ENCODE measurements at regions of chr14 and their contacts with region 1.

Region 1: GRCh38 chr14:34982417-34983147 is at the start of gene SRP54:
- DNase-seq: peak; percentile 99
- ATAC-seq: peak; percentile 91
- H3K4me3 ChIP-seq: peak within 1 kb of the TSS; percentile 71 to 99 (median 95)
- H3K4me3 Mint-ChIP-seq: no peak within 1 kb of the TSS
- H3K27ac ChIP-seq: peak within 1 kb of the TSS; percentile 95 to 97
- H3K27ac Mint-ChIP-seq: no peak within 1 kb of the TSS
- H3K4me1 ChIP-seq: peaks cover 25 to 26% of the 10 kb centered on the region in 2 donors
- H3K4me1 Mint-ChIP-seq: peaks cover 23% of the 10 kb centered on the region
- H3K27me3 ChIP-seq: no peaks in the 10 kb centered on the region
- H3K27me3 Mint-ChIP-seq: no peaks in the 10 kb centered on the region
- CTCF ChIP-seq: no peak
- total RNA-seq, gene SRP54: 54.9 and 59.5 TPM in 2 replicates

Region 2: DNA sequence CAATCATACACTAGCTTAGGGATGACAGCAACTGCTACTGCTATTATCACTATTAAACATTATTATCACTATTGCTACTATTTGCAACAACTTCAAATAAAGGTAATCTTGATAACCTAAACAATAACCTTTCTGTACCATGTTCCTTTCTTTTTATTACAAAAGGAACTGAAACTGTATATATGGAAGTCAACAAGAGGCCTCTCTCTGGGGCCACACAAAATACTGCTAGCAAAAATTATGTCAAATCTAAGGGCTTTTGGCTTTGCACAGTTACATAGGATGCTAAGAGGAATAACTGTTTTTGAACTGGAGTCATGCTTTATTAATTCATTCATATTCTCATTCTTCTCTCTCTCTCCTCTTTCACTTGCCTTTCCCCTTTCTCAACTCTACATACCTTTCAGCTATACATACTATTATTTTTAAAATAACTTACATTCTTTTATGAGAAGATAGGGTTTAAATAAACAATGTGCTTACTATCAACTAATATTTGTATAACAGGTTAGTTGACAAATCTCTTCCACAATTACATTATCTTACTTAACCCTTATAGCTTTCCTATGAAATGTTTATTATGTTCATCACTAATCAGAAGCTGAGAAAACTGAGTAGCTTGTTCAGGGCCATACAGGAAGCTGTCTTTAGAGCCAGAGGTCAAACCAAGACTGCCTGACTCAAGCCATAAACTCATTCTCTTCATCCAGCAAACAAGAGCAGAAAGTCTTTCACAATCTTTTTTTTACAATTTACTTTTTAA is 546.3 kb before region 1 on chr14:
- CTCF ChIA-PET with region 1: no interaction called
- POLR2A ChIA-PET with region 1: no interaction called
- intact Hi-C with region 1: no loop called
- DNase-seq: no peak
- ATAC-seq: no peak
- H3K4me3 ChIP-seq: no peak overlapping the region
- H3K4me3 Mint-ChIP-seq: no peak overlapping the region
- H3K27ac ChIP-seq: peak overlapping the region in 1 of 2 donors; percentile 45
- H3K27ac Mint-ChIP-seq: no peak overlapping the region
- H3K4me1 ChIP-seq: peaks cover 14 to 15% of the 10 kb centered on the region in 2 donors
- H3K4me1 Mint-ChIP-seq: peaks cover 21% of the 10 kb centered on the region
- H3K27me3 ChIP-seq: no peaks in the 10 kb centered on the region
- H3K27me3 Mint-ChIP-seq: no peaks in the 10 kb centered on the region
- CTCF ChIP-seq: no peak

Region 3: GRCh38 chr14:34539407-34540180 is 443.0 kb before region 1 on chr14 and contains the start of gene EAPP:
- CTCF ChIA-PET with region 1: no interaction called
- POLR2A ChIA-PET with region 1: no interaction called
- intact Hi-C with region 1: loop called (anchors 5 kb)
- DNase-seq: peak; percentile 96
- ATAC-seq: peak; percentile 99
- H3K4me3 ChIP-seq: peak within 1 kb of the TSS; percentile 44 to 97 (median 89)
- H3K4me3 Mint-ChIP-seq: peak within 1 kb of the TSS; percentile 99
- H3K27ac ChIP-seq: peak within 1 kb of the TSS; percentile 91 to 97
- H3K27ac Mint-ChIP-seq: peak within 1 kb of the TSS; percentile 99
- H3K4me1 ChIP-seq: peaks cover 18 to 24% of the 10 kb centered on the region in 2 donors
- H3K4me1 Mint-ChIP-seq: peaks cover 21% of the 10 kb centered on the region
- H3K27me3 ChIP-seq: no peaks in the 10 kb centered on the region
- H3K27me3 Mint-ChIP-seq: no peaks in the 10 kb centered on the region
- CTCF ChIP-seq: no peak
- total RNA-seq, gene EAPP: 54.8 and 58.0 TPM in 2 replicates

Region 4: DNA sequence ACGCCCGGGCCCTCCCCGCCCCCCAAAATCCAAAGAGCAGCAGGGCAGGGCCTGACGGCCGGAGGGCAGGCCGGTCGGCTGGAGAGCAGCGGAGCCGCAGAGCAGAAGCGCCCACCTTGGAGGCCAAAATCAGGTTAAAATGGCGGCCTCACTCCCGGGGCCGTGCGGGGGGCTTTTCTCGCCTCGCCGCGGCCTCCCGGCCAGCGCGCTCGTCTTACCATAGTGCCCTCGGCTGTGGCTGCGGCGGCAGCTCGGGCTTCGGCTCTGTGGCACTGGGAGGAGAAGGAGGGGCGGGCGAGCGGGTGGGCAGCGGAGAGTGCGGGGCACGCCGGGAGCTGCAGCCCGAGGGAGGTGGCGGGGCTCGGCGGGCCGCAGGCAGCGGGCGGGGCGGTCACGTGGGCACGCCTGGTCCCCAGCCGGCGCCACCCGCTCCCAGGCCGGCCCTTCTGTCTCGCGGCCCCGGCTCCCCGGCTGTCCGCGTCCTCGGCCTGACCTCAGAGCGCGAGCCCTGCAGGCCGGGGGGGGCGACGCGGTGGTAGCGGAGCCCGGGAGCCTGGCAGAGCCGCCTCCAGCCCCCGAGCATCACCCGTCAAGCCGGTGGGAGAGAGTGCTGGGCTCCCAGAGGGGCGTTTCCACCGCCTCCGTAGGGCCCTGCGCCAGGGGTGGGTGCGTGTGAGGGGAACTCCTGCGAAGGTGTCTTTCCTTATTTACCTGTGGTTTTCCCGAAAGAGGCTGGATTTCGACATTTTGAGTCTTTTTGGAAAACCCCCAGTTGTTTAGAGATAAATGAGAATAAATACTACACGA is 268.1 kb before region 1 on chr14 and contains the start of gene CFL2:
- CTCF ChIA-PET with region 1: no interaction called
- POLR2A ChIA-PET with region 1: interaction called, 9 read pairs
- intact Hi-C with region 1: loop called (anchors 2 kb)
- DNase-seq: peak; percentile 86
- ATAC-seq: peak; percentile 91
- H3K4me3 ChIP-seq: peak within 1 kb of the TSS; percentile 61 to 91 (median 81)
- H3K4me3 Mint-ChIP-seq: peak within 1 kb of the TSS; percentile 94
- H3K27ac ChIP-seq: peak within 1 kb of the TSS; percentile 75 to 87
- H3K27ac Mint-ChIP-seq: peak within 1 kb of the TSS; percentile 94
- H3K4me1 ChIP-seq: peaks cover 11 to 15% of the 10 kb centered on the region in 2 donors
- H3K4me1 Mint-ChIP-seq: peaks cover 29% of the 10 kb centered on the region
- H3K27me3 ChIP-seq: no peaks in the 10 kb centered on the region
- H3K27me3 Mint-ChIP-seq: no peaks in the 10 kb centered on the region
- CTCF ChIP-seq: no peak
- total RNA-seq, gene CFL2: 21.9 and 25.2 TPM in 2 replicates

Region 5: GRCh38 chr14:34895277-34895676 is 87.3 kb before region 1 on chr14:
- CTCF ChIA-PET with region 1: no interaction called
- POLR2A ChIA-PET with region 1: no interaction called
- intact Hi-C with region 1: no loop called
- DNase-seq: no peak
- ATAC-seq: no peak
- H3K4me3 ChIP-seq: no peak overlapping the region
- H3K4me3 Mint-ChIP-seq: no peak overlapping the region
- H3K27ac ChIP-seq: no peak overlapping the region
- H3K27ac Mint-ChIP-seq: no peak overlapping the region
- H3K4me1 ChIP-seq: peaks cover 0 to 4% of the 10 kb centered on the region in 2 donors
- H3K4me1 Mint-ChIP-seq: peaks cover 5% of the 10 kb centered on the region
- H3K27me3 ChIP-seq: no peaks in the 10 kb centered on the region
- H3K27me3 Mint-ChIP-seq: no peaks in the 10 kb centered on the region
- CTCF ChIP-seq: no peak

Region 6: GRCh38 chr14:35034440-35034833 is 51.9 kb after region 1 on chr14:
- CTCF ChIA-PET with region 1: no interaction called
- POLR2A ChIA-PET with region 1: no interaction called
- intact Hi-C with region 1: no loop called
- DNase-seq: no peak
- ATAC-seq: no peak
- H3K4me3 ChIP-seq: no peak overlapping the region
- H3K4me3 Mint-ChIP-seq: no peak overlapping the region
- H3K27ac ChIP-seq: no peak overlapping the region
- H3K27ac Mint-ChIP-seq: no peak overlapping the region
- H3K4me1 ChIP-seq: no peaks in the 10 kb centered on the region
- H3K4me1 Mint-ChIP-seq: no peaks in the 10 kb centered on the region
- H3K27me3 ChIP-seq: no peaks in the 10 kb centered on the region
- H3K27me3 Mint-ChIP-seq: no peaks in the 10 kb centered on the region
- CTCF ChIP-seq: no peak

Region 7: GRCh38 chr14:35292051-35292769 is 309.6 kb after region 1 on chr14 and contains the start of gene PSMA6:
- CTCF ChIA-PET with region 1: no interaction called
- POLR2A ChIA-PET with region 1: no interaction called
- intact Hi-C with region 1: loop called (anchors 1 kb)
- DNase-seq: peak; percentile 99
- ATAC-seq: peak; percentile 98
- H3K4me3 ChIP-seq: peak within 1 kb of the TSS; percentile 71 to 96 (median 93)
- H3K4me3 Mint-ChIP-seq: peak within 1 kb of the TSS; percentile 99
- H3K27ac ChIP-seq: peak within 1 kb of the TSS; percentile 75 to 93
- H3K27ac Mint-ChIP-seq: peak within 1 kb of the TSS; percentile 96
- H3K4me1 ChIP-seq: peaks cover 34 to 44% of the 10 kb centered on the region in 2 donors
- H3K4me1 Mint-ChIP-seq: peaks cover 44% of the 10 kb centered on the region
- H3K27me3 ChIP-seq: no peaks in the 10 kb centered on the region
- H3K27me3 Mint-ChIP-seq: no peaks in the 10 kb centered on the region
- CTCF ChIP-seq: no peak
- total RNA-seq, gene PSMA6: 70.6 and 86.8 TPM in 2 replicates

Measured in B cell (primary cell).